ENCODE measurements at regions of chr12 and their contacts with region 1.

Region 1: DNA sequence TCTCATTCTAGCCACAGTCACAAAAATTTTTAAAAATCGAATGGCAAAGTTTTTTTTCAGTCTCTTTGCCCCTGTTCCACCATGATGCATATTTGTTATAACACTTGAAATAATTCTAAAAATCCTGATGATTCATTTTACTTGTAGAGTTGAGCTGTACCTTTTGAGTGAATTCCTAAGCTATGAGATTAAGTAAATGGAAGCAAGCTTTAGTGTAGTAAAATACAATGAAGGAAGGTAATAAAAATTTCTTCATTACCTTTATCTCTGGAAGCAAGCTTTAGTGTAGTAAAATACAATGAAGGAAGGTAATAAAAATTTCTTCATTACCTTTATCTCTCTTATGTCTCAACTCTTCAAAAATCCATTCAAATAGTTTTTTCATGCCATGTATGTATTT is 46.1 kb downstream of the TMTC3 start:
- DNase-seq: no peak
- H3K4me3 ChIP-seq: no peak overlapping the region
- H3K27ac ChIP-seq: no peak overlapping the region
- H3K4me1 ChIP-seq: no peaks in the 10 kb centered on the region
- H3K27me3 ChIP-seq: no peaks in the 10 kb centered on the region
- CTCF ChIP-seq: no peak

Region 2: DNA sequence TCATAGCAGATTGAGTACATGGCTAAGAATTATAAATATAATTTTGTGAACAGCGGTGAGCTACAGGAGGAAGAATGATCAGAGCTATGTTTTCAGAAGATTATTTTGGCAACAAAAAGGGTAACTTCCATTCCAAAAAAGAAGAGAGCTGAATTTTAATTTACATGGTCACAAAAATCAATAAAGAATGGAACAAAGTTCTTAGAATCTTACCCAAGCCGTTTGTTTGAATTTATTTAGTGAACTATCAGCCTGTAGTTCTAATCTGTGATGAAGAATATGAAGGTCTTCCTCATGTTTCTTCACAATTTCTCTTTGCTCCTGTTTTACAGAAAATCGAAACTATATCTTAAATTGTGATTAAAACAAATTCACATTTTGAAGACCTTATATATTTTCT is 104.5 kb before region 1 on chr12:
- CTCF ChIA-PET with region 1: no interaction called
- POLR2A ChIA-PET with region 1: no interaction called
- intact Hi-C with region 1: no loop called
- DNase-seq: no peak
- H3K4me3 ChIP-seq: no peak overlapping the region
- H3K27ac ChIP-seq: no peak overlapping the region
- H3K4me1 ChIP-seq: no peaks in the 10 kb centered on the region
- H3K27me3 ChIP-seq: no peaks in the 10 kb centered on the region
- CTCF ChIP-seq: no peak

Region 3: GRCh38 chr12:88351121-88351520 is 162.9 kb after region 1 on chr12:
- CTCF ChIA-PET with region 1: no interaction called
- POLR2A ChIA-PET with region 1: no interaction called
- intact Hi-C with region 1: no loop called
- DNase-seq: no peak
- H3K4me3 ChIP-seq: no peak overlapping the region
- H3K27ac ChIP-seq: no peak overlapping the region
- H3K4me1 ChIP-seq: no peaks in the 10 kb centered on the region
- H3K27me3 ChIP-seq: no peaks in the 10 kb centered on the region
- CTCF ChIP-seq: no peak

Region 4: GRCh38 chr12:88448337-88448915 is 260.2 kb after region 1 on chr12:
- CTCF ChIA-PET with region 1: no interaction called
- POLR2A ChIA-PET with region 1: interaction called, 16 read pairs
- intact Hi-C with region 1: no loop called
- DNase-seq: no peak
- H3K4me3 ChIP-seq: no peak overlapping the region
- H3K27ac ChIP-seq: no peak overlapping the region
- H3K4me1 ChIP-seq: no peaks in the 10 kb centered on the region
- H3K27me3 ChIP-seq: no peaks in the 10 kb centered on the region
- CTCF ChIP-seq: no peak

Measured in A673 (cell line).